ENCODE measurements at regions of chr1 and their contacts with region 1.

Region 1: GRCh38 chr1:85200870-85201339 is at the start of gene SYDE2:
- DNase-seq: peak; percentile 72 to 91 (median 89)
- ATAC-seq: peak; percentile 90
- H3K4me3 ChIP-seq: peak within 1 kb of the TSS; percentile 84
- H3K4me3 Mint-ChIP-seq: peak within 1 kb of the TSS; percentile 86 to 100 (median 98)
- H3K27ac ChIP-seq: peak within 1 kb of the TSS; percentile 96
- H3K27ac Mint-ChIP-seq: peak within 1 kb of the TSS; percentile 88 to 100 (median 99)
- H3K4me1 ChIP-seq: peaks cover 7 to 11% of the 10 kb centered on the region in 2 donors
- H3K4me1 Mint-ChIP-seq: peaks cover 15 to 61% (median 53%) of the 10 kb centered on the region in 7 donors
- H3K27me3 ChIP-seq: no peaks in the 10 kb centered on the region
- H3K27me3 Mint-ChIP-seq: peaks cover 0 to 46% (median 0%) of the 10 kb centered on the region in 5 donors
- total RNA-seq, gene SYDE2: 1.2 to 9.1 (median 8.4) TPM

Region 2: GRCh38 chr1:83508485-83509151 is 1692.3 kb before region 1 on chr1:
- CTCF ChIA-PET with region 1: no interaction called
- POLR2A ChIA-PET with region 1: no interaction called
- intact Hi-C with region 1: loop called in 1 of 2 experiments (anchors 10 kb)
- DNase-seq: peak in 8 of 9 donors; percentile 27 to 89 (median 84)
- ATAC-seq: peak; percentile 96
- H3K4me3 ChIP-seq: peak overlapping the region; percentile 7
- H3K4me3 Mint-ChIP-seq: peak overlapping the region; percentile 56 to 96 (median 74)
- H3K27ac ChIP-seq: peak overlapping the region; percentile 76
- H3K27ac Mint-ChIP-seq: peak overlapping the region; percentile 89 to 99 (median 95)
- H3K4me1 ChIP-seq: peaks cover 6 to 36% of the 10 kb centered on the region in 2 donors
- H3K4me1 Mint-ChIP-seq: peaks cover 17 to 78% (median 64%) of the 10 kb centered on the region in 7 donors
- H3K27me3 ChIP-seq: no peaks in the 10 kb centered on the region
- H3K27me3 Mint-ChIP-seq: no peaks in the 10 kb centered on the region

Region 3: GRCh38 chr1:84478876-84479868 is 721.7 kb before region 1 on chr1 and contains the start of gene RPF1:
- CTCF ChIA-PET with region 1: no interaction called
- POLR2A ChIA-PET with region 1: interaction called, 4 read pairs
- intact Hi-C with region 1: loop called in 1 of 2 experiments (anchors 1 kb)
- DNase-seq: peak; percentile 61 to 88 (median 83)
- ATAC-seq: peak; percentile 97
- H3K4me3 ChIP-seq: peak within 1 kb of the TSS; percentile 72
- H3K4me3 Mint-ChIP-seq: peak within 1 kb of the TSS; percentile 88 to 100 (median 98)
- H3K27ac ChIP-seq: peak within 1 kb of the TSS; percentile 80
- H3K27ac Mint-ChIP-seq: peak within 1 kb of the TSS; percentile 98 to 100 (median 99)
- H3K4me1 ChIP-seq: peaks cover 22 to 28% of the 10 kb centered on the region in 2 donors
- H3K4me1 Mint-ChIP-seq: peaks cover 29 to 60% (median 49%) of the 10 kb centered on the region in 7 donors
- H3K27me3 ChIP-seq: peaks cover 0 to 7% of the 10 kb centered on the region in 2 donors
- H3K27me3 Mint-ChIP-seq: peaks cover 21 to 35% (median 26%) of the 10 kb centered on the region in 5 donors
- total RNA-seq, gene RPF1: 35.5 to 52.3 (median 44.1) TPM

Region 4: DNA sequence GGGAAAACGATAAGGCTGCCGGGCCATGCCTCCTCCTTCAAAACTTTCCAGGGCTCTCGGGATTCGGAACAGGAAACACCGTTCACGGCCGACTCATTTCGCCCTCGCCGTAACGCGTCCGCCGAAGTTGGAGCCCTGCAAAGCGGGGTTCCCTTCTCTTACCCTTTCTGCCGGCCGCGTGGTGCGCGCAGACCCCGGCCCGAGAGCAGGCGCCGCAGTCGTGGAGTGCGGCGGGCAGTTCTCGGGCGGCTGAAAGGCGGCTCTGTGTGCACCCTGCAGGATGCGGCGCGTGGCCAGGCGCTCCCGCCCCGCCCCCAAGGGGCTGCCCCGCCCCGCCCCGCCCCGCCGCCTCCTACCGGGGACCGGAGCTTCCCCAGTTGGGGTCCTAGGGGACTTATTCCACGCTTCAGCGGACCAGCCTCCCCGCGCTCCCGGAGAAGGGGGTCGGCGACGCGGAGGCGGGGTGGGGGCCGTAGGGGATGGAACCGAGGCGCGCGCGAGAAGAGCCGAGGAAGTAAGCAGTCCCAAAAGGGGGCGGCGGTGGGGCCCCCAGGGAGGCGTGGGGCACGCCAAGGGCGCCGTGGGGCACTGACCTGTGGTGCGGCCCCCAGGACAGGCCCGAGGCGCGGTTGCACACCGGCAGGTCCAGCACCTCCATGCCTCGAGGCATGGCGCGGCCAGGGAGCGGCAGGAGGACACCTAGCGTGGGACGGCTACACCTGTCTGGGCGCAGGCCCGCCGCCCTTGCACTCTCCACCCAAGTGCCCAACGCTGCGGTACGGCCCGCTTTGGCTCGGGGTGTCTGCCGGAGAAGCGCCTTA is 203.8 kb before region 1 on chr1 and contains the start of gene MCOLN2:
- CTCF ChIA-PET with region 1: no interaction called
- POLR2A ChIA-PET with region 1: interaction called, 3 read pairs
- intact Hi-C with region 1: loop called (anchors 1 to 2 kb)
- DNase-seq: peak; percentile 7 to 69 (median 37)
- ATAC-seq: peak; percentile 89
- H3K4me3 ChIP-seq: peak within 1 kb of the TSS; percentile 77
- H3K4me3 Mint-ChIP-seq: peak within 1 kb of the TSS; percentile 80 to 95 (median 86)
- H3K27ac ChIP-seq: no peak within 1 kb of the TSS
- H3K27ac Mint-ChIP-seq: peak within 1 kb of the TSS in 4 of 9 donors; percentile 33 to 85 (median 66)
- H3K4me1 ChIP-seq: peaks cover 17 to 26% of the 10 kb centered on the region in 2 donors
- H3K4me1 Mint-ChIP-seq: peaks cover 13 to 57% (median 16%) of the 10 kb centered on the region in 7 donors
- H3K27me3 ChIP-seq: peaks cover 0 to 13% of the 10 kb centered on the region in 2 donors
- H3K27me3 Mint-ChIP-seq: peaks cover 28 to 55% (median 35%) of the 10 kb centered on the region in 5 donors
- total RNA-seq, gene MCOLN2: 2.5 to 35.7 (median 3.1) TPM

Region 5: DNA sequence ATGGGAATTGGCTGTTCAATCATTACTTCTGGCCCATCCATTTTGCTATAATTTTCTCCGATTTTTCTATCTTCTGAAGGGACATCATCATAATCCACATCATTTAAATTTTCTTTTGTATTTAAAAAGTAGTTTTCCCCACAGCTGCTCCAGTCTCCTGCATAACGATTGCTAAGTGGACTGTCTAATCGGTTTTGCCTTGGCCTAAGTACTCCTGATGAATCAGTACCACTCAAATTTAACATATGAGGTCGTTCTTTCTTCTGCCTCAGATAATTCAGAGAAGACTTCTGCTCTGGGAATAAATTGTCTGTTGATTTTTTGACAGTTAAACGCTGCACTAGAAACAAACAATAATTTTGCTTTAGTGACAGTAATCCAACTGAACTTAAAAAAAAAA is 42.0 kb before region 1 on chr1:
- CTCF ChIA-PET with region 1: no interaction called
- POLR2A ChIA-PET with region 1: interaction called, 10 read pairs
- intact Hi-C with region 1: loop called in 1 of 2 experiments (anchors 5 kb)
- DNase-seq: no peak
- ATAC-seq: no peak
- H3K4me3 ChIP-seq: no peak overlapping the region
- H3K4me3 Mint-ChIP-seq: no peak overlapping the region
- H3K27ac ChIP-seq: no peak overlapping the region
- H3K27ac Mint-ChIP-seq: no peak overlapping the region
- H3K4me1 ChIP-seq: no peaks in the 10 kb centered on the region
- H3K4me1 Mint-ChIP-seq: peaks cover 0 to 4% (median 0%) of the 10 kb centered on the region in 7 donors
- H3K27me3 ChIP-seq: no peaks in the 10 kb centered on the region
- H3K27me3 Mint-ChIP-seq: no peaks in the 10 kb centered on the region

Region 6: GRCh38 chr1:85259118-85259911 is 58.4 kb after region 1 on chr1 and contains the start of gene C1orf52:
- CTCF ChIA-PET with region 1: interaction called, 9 read pairs
- POLR2A ChIA-PET with region 1: interaction called, 24 read pairs
- intact Hi-C with region 1: loop called (anchors 1 kb)
- DNase-seq: peak; percentile 92 to 99 (median 96)
- ATAC-seq: peak; percentile 99
- H3K4me3 ChIP-seq: peak within 1 kb of the TSS; percentile 83
- H3K4me3 Mint-ChIP-seq: peak within 1 kb of the TSS; percentile 93 to 99 (median 98)
- H3K27ac ChIP-seq: peak within 1 kb of the TSS; percentile 90
- H3K27ac Mint-ChIP-seq: peak within 1 kb of the TSS; percentile 91 to 98 (median 96)
- H3K4me1 ChIP-seq: peaks cover 14 to 16% of the 10 kb centered on the region in 2 donors
- H3K4me1 Mint-ChIP-seq: peaks cover 19 to 52% (median 45%) of the 10 kb centered on the region in 7 donors
- H3K27me3 ChIP-seq: no peaks in the 10 kb centered on the region
- H3K27me3 Mint-ChIP-seq: no peaks in the 10 kb centered on the region
- total RNA-seq, gene C1orf52: 25.7 to 55.4 (median 46.1) TPM

Measured in naive thymus-derived CD4-positive, alpha-beta T cell (primary cell).